ENCODE measurements at regions of chr7 and their contacts with region 1.

Region 1: DNA sequence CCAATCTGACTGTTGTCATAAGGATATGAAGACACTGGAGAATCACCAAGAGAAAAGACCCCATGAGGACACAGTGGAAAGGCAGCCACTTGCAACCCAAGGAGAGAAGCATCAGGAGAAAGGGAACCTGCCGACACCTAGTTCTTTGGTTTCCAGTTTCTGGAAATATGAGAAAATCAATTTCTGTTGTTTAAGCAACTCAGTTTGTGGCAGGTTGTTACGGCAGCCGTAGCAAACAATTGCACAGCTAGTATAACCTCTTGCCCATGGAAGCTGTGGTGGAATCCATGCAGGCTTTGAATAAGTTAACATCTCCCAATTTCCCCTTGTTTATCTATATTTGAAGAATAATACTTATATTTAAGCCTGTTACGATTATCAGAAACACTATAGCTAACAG is 1103.0 kb upstream of the PHF14 start:
- DNase-seq: no peak
- ATAC-seq: no peak
- H3K4me3 ChIP-seq: no peak overlapping the region
- H3K27ac ChIP-seq: no peak overlapping the region
- H3K4me1 ChIP-seq: no peaks in the 10 kb centered on the region
- H3K27me3 ChIP-seq: no peaks in the 10 kb centered on the region
- CTCF ChIP-seq: no peak
- POLR2A ChIP-seq: no peak

Region 2: GRCh38 chr7:9036080-9036479 is 834.6 kb before region 1 on chr7:
- intact Hi-C with region 1: no loop called
- DNase-seq: no peak
- ATAC-seq: no peak
- H3K4me3 ChIP-seq: no peak overlapping the region
- H3K27ac ChIP-seq: no peak overlapping the region
- H3K4me1 ChIP-seq: no peaks in the 10 kb centered on the region
- H3K27me3 ChIP-seq: no peaks in the 10 kb centered on the region
- CTCF ChIP-seq: no peak
- POLR2A ChIP-seq: no peak

Region 3: DNA sequence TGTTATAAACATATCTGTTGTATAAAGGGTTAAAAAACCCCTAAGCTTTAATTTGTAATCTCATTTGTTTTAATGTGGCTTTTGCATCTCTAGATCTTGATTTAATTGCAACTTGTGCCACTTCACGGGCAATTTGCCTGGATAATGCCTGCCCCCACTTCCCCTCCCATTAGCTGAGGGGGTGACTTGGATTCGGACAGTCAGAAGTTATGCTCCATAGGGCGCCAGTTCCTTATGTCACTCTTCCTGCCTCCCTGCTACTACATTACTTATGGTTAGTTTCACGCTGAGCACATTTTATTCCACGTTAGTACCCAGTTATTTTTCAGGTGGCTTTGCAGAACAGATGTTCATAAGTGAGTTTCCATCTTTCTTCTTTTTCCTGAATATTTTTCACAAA is 87.8 kb after region 1 on chr7:
- intact Hi-C with region 1: loop called in 1 of 10 experiments (anchors 1 kb)
- DNase-seq: no peak
- ATAC-seq: no peak
- H3K4me3 ChIP-seq: no peak overlapping the region
- H3K27ac ChIP-seq: no peak overlapping the region
- H3K4me1 ChIP-seq: no peaks in the 10 kb centered on the region
- H3K27me3 ChIP-seq: no peaks in the 10 kb centered on the region
- CTCF ChIP-seq: no peak
- POLR2A ChIP-seq: no peak